SK-N-SH (cell line): ENCODE measurements at regions of chr2 and their contacts with region 1.

Region 1: GRCh38 chr2:201860636-201861066 is 54.3 kb downstream of the CDK15 start:
- DNase-seq: peak; percentile 79
- H3K4me3 ChIP-seq: no peak overlapping the region; a peak in 1 of 4 replicates
- H3K27ac ChIP-seq: peak overlapping the region; percentile 41 to 53
- H3K4me1 ChIP-seq: peaks cover 3 to 20% of the 10 kb centered on the region in 2 experiments
- H3K27me3 ChIP-seq: no peaks in the 10 kb centered on the region
- CTCF ChIP-seq: peak; percentile 81
- EP300 ChIP-seq: no peak
- RAD21 ChIP-seq: peak; percentile 99

Region 2: GRCh38 chr2:201795607-201796477 is 64.8 kb before region 1 on chr2:
- CTCF ChIA-PET with region 1: interaction called, 12 read pairs
- POLR2A ChIA-PET with region 1: no interaction called
- DNase-seq: peak; percentile 77
- H3K4me3 ChIP-seq: no peak overlapping the region; a peak in 1 of 4 replicates
- H3K27ac ChIP-seq: peak overlapping the region; percentile 3 to 99; a peak in 3 of 4 replicates
- H3K4me1 ChIP-seq: peaks cover 0 to 22% of the 10 kb centered on the region in 2 experiments; a peak in 2 of 4 replicates
- H3K27me3 ChIP-seq: no peaks in the 10 kb centered on the region
- CTCF ChIP-seq: peak; percentile 83
- EP300 ChIP-seq: no peak
- RAD21 ChIP-seq: peak; percentile 95

Region 3: DNA sequence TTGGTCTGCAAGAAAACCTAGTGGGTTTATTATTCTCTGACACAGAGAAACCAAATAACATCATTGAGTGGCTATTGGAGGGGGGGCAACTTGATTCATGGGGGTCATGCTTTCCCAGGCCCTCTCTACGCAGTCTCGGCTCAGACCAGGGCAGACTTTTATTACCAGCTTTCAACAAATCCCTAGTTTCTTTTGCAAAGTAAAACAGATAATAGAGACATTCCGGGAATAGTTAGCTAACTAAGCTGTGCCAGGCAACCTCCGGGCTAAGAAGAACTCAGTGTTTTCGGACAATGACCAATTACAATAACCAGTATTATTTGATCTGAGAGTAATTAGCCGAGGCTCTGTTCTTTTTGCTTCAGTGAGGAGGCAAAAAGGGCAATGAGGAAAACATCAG is 11.9 kb after region 1 on chr2:
- CTCF ChIA-PET with region 1: interaction called, 23 read pairs
- POLR2A ChIA-PET with region 1: no interaction called
- DNase-seq: no peak
- H3K4me3 ChIP-seq: no peak overlapping the region
- H3K27ac ChIP-seq: no peak overlapping the region
- H3K4me1 ChIP-seq: no peaks in the 10 kb centered on the region
- H3K27me3 ChIP-seq: no peaks in the 10 kb centered on the region
- CTCF ChIP-seq: no peak
- EP300 ChIP-seq: no peak
- RAD21 ChIP-seq: no peak

Region 4: DNA sequence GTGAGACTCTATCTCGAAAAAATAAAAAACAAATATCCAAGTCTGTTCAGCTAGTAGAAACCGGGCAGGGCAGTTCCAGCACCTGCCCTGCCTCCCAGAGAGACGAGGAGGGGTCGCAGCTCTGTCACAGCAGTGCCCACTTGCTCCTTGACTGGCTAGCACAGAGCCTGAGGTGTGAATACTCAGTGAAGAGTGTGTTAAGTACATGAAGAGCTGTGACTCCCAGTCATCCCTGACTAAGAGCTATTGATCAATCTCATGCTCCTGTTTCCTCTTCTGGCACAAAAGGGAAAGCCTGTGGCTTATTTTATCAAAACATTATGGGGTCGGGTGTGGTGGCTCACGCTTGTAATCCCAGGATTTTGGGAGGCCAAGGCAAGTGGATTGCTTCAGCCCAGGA is 90.0 kb after region 1 on chr2:
- CTCF ChIA-PET with region 1: interaction called, 19 read pairs
- POLR2A ChIA-PET with region 1: no interaction called
- DNase-seq: no peak
- H3K4me3 ChIP-seq: no peak overlapping the region
- H3K27ac ChIP-seq: no peak overlapping the region
- H3K4me1 ChIP-seq: peaks cover 6 to 10% of the 10 kb centered on the region in 2 experiments; a peak in 2 of 4 replicates
- H3K27me3 ChIP-seq: no peaks in the 10 kb centered on the region
- CTCF ChIP-seq: no peak
- EP300 ChIP-seq: no peak
- RAD21 ChIP-seq: no peak

Region 5: DNA sequence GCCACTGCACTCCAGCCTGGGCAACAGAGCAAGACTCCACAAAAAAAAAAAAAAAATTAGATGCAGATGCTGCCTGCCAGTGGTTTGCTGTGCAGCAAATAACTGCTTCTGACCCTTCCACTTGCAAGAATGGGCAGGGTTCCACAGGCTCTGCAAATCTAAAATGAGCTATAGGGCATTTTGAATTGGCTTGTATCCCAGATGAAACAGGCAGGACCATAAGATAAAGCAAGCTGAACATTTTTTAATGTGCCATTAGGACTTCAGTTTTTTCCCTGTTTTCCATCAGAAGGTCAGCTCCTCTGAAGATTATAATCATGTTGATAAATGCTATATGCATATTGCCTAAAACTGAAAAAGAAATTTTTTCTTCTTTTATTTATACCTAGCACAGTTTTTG is 157.3 kb after region 1 on chr2:
- CTCF ChIA-PET with region 1: interaction called, 13 read pairs
- POLR2A ChIA-PET with region 1: no interaction called
- DNase-seq: peak; percentile 72
- H3K4me3 ChIP-seq: no peak overlapping the region
- H3K27ac ChIP-seq: peak overlapping the region; percentile 45 to 98; a peak in 3 of 4 replicates
- H3K4me1 ChIP-seq: peaks cover 12 to 45% of the 10 kb centered on the region in 2 experiments; a peak in 3 of 4 replicates
- H3K27me3 ChIP-seq: no peaks in the 10 kb centered on the region
- CTCF ChIP-seq: no peak
- EP300 ChIP-seq: peak; percentile 75 to 98
- RAD21 ChIP-seq: peak; percentile 42

Region 6: GRCh38 chr2:202149155-202149762 is 288.6 kb after region 1 on chr2:
- CTCF ChIA-PET with region 1: interaction called, 13 read pairs
- POLR2A ChIA-PET with region 1: no interaction called
- DNase-seq: no peak
- H3K4me3 ChIP-seq: no peak overlapping the region
- H3K27ac ChIP-seq: no peak overlapping the region
- H3K4me1 ChIP-seq: peaks cover 2 to 12% of the 10 kb centered on the region in 2 experiments; a peak in 2 of 4 replicates
- H3K27me3 ChIP-seq: no peaks in the 10 kb centered on the region
- CTCF ChIP-seq: no peak
- EP300 ChIP-seq: no peak
- RAD21 ChIP-seq: no peak

Region 7: GRCh38 chr2:202178342-202178958 is 317.8 kb after region 1 on chr2:
- CTCF ChIA-PET with region 1: interaction called, 76 read pairs
- POLR2A ChIA-PET with region 1: no interaction called
- DNase-seq: peak; percentile 68
- H3K4me3 ChIP-seq: no peak overlapping the region; a peak in 1 of 4 replicates
- H3K27ac ChIP-seq: no peak overlapping the region
- H3K4me1 ChIP-seq: no peaks in the 10 kb centered on the region
- H3K27me3 ChIP-seq: no peaks in the 10 kb centered on the region
- CTCF ChIP-seq: peak; percentile 89
- EP300 ChIP-seq: no peak
- RAD21 ChIP-seq: peak; percentile 98